Dorsolateral prefrontal cortex (tissue), 120 donors: ENCODE measurements at regions of chr11 and their contacts with region 1.

Region 1: DNA sequence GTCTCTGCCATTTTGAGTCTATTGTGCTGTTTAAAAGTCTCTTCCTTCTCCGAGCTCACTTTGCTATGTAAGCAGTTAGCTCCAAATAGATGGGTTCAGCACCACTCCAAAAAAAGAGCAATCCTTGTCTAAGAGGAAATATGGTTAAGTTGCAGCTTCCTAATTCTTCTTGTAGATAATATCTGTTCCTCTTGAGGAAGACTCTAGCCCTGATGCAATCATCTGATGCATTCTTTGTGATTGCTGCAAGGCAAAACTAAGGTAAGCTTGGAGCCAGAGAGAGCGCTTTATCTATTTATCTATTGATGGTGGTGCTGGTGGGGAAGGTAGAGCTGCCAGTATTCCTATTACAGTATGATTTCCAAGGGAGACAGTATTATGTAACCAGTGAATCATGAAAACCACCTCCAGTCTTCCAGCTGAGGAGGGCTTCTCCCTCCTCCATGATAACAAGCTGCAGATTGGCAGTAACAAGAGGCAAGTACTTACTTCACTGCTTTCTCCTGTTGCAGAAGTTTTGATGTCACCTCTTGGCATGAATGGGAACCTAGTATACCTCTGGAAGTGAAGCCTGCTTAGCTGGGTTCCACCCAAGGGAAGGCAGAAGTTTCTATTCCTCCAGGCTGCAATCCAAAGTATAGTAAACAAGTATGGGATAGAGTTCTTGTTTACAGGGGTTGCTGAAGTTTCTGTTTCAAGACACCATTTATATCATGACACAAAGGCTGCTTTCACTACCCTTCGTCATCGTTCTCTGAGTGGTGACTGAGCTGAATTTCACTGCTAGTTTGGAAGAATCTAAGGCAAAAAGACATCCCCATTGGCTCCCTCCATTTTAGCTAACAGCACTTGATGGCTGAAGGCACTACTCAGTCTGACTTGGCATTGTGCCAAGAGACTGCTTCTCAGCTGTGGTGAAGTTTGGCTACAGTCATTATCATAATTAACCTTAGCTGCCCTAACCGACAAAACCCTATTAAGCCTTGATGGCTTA is 49.7 kb downstream of the FDX1 start:
- DNase-seq: peak in 1 of 10 donors; percentile 26
- H3K4me3 ChIP-seq: peak overlapping the region in 15 of 59 donors; percentile 1 to 40 (median 7)
- H3K27ac ChIP-seq: peak overlapping the region in 58 of 59 donors; percentile 6 to 85 (median 63)
- H3K27me3 ChIP-seq: no peaks in the 10 kb centered on the region
- CTCF ChIP-seq: no peak

Region 2: GRCh38 chr11:110447897-110448745 is 31.3 kb before region 1 on chr11:
- intact Hi-C with region 1: no loop called
- DNase-seq: no peak
- H3K4me3 ChIP-seq: no peak overlapping the region
- H3K27ac ChIP-seq: no peak overlapping the region
- H3K27me3 ChIP-seq: no peaks in the 10 kb centered on the region
- CTCF ChIP-seq: peak in 55 of 56 donors; percentile 33 to 68 (median 52)

Region 3: DNA sequence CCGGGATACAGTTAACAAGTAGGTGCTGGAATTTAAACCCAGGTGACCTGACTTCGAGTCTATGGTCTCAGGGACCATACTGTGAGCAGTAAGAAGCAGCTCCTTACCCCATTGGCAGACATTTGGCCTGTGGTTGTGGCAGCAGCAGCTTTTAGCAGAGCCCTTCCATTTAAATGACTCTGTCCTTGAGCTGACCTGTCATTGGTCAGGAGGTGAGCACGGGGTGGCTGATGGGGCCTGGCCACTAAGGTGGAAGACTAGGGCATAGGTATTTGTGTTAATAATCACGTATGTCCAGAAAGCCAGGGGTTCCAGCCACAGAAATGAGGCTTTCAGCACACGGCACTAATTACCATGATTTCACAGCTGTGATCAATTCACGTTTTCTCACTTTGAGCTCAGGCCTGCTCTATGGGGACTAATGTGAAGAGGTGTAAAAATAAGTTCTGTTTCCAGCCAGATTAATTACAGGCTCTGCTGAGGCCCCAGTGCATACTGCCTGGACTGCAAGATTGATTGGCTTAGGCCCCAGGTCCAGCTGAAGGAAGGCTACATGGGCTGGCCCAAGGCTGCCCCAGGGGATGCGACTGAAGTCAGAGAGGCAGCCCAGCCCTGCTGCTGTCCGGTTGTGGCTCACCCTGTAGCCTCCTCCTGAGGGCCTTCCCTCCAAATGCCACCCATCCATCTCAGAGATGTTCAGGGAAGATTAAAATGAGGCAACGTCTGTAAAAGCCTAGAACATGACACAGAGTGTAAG is 26.3 kb after region 1 on chr11:
- intact Hi-C with region 1: no loop called
- DNase-seq: no peak
- H3K4me3 ChIP-seq: no peak overlapping the region
- H3K27ac ChIP-seq: no peak overlapping the region
- H3K27me3 ChIP-seq: no peaks in the 10 kb centered on the region
- CTCF ChIP-seq: no peak

Region 4: GRCh38 chr11:110711776-110712658 is 232.6 kb after region 1 on chr11 and contains the start of gene ARHGAP20:
- intact Hi-C with region 1: loop called in 1 of 2 experiments (anchors 10 kb)
- DNase-seq: peak in 9 of 10 donors; percentile 35 to 81 (median 62)
- H3K4me3 ChIP-seq: peak within 1 kb of the TSS; percentile 56 to 91 (median 77)
- H3K27ac ChIP-seq: peak within 1 kb of the TSS in 58 of 59 donors; percentile 29 to 94 (median 82)
- H3K27me3 ChIP-seq: no peaks in the 10 kb centered on the region
- CTCF ChIP-seq: peak in 2 of 56 donors; percentile 5 to 11
- total RNA-seq, gene ARHGAP20: 7.1 to 28.5 (median 18.2) TPM